ENCODE measurements at regions of chr10 and their contacts with region 1.

Region 1: GRCh38 chr10:102231357-102232318 is 5.5 kb downstream of the ELOVL3 start:
- DNase-seq: peak; percentile 20 to 57
- ATAC-seq: peak in 7 of 8 donors; percentile 10 to 48 (median 33)
- H3K4me3 ChIP-seq: peak overlapping the region; percentile 13 to 57 (median 42)
- H3K27ac ChIP-seq: no peak overlapping the region
- H3K4me1 ChIP-seq: peaks cover 5 to 40% (median 18%) of the 10 kb centered on the region in 9 donors
- H3K27me3 ChIP-seq: peaks cover 0 to 69% (median 36%) of the 10 kb centered on the region in 7 donors
- CTCF ChIP-seq: peak; percentile 24 to 84 (median 66)

Region 2: GRCh38 chr10:102405596-102405995 is 174.0 kb after region 1 on chr10:
- intact Hi-C with region 1: loop called in 2 of 10 experiments (anchors 1 kb)
- DNase-seq: no peak
- ATAC-seq: no peak
- H3K4me3 ChIP-seq: no peak overlapping the region
- H3K27ac ChIP-seq: no peak overlapping the region
- H3K4me1 ChIP-seq: peaks cover 0 to 21% (median 13%) of the 10 kb centered on the region in 9 donors
- H3K27me3 ChIP-seq: peaks cover 11 to 37% (median 31%) of the 10 kb centered on the region in 7 donors
- CTCF ChIP-seq: no peak